Transverse colon (tissue), 4 donors: ENCODE measurements at regions of chr6 and their contacts with region 1.

Region 1: DNA sequence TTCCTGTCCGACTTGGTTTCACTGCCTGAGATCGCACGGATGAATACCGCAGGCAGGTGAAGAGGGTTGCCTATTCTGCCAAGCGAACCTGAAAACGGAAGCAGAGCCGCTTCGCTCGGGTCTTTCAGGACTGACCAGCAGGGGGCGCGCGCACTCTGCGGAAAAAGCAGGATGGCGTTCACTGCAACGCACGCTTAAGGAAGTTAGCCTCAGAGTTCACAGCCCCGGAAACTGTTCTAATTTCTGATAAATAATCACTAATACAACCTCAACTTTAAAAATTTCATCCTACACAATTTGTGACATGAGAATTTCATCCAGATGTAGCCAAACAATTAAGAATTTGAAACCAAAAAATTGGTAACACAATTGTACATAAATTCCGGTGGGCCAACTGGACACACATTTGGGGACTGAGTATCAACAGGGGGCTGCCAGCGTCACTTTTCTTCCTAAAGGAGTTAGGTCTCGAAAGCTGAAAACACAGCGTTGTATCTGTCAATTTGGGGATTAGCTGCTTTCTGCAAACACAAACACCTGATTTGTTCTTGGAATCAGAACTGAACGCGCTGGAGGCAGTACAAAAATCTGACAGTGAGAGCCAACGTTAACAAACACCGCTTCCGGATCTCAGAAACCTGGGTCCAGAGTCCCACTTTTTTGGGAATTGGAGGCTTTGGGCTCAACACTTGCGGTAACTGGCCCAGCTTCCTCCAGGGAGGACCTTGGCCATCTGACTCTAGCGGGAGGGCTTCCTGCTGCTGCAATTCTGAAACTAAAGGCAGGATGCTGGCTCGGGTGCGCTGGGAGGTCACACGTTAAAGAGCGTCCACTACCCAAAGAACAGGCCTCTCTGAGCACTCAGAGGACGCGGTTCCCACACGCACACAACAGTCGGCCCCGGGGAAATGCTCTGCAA is 8.8 kb downstream of the PXDC1 start:
- DNase-seq: peak; percentile 91
- H3K4me3 ChIP-seq: peak overlapping the region in 1 of 4 donors; percentile 20
- H3K27ac ChIP-seq: peak overlapping the region; percentile 62 to 84 (median 74)
- H3K4me1 ChIP-seq: peaks cover 16 to 49% (median 37%) of the 10 kb centered on the region in 4 donors
- H3K27me3 ChIP-seq: no peaks in the 10 kb centered on the region
- CTCF ChIP-seq: peak; percentile 94 to 96 (median 95)
- EP300 ChIP-seq: no peak
- POLR2A ChIP-seq: no peak

Region 2: DNA sequence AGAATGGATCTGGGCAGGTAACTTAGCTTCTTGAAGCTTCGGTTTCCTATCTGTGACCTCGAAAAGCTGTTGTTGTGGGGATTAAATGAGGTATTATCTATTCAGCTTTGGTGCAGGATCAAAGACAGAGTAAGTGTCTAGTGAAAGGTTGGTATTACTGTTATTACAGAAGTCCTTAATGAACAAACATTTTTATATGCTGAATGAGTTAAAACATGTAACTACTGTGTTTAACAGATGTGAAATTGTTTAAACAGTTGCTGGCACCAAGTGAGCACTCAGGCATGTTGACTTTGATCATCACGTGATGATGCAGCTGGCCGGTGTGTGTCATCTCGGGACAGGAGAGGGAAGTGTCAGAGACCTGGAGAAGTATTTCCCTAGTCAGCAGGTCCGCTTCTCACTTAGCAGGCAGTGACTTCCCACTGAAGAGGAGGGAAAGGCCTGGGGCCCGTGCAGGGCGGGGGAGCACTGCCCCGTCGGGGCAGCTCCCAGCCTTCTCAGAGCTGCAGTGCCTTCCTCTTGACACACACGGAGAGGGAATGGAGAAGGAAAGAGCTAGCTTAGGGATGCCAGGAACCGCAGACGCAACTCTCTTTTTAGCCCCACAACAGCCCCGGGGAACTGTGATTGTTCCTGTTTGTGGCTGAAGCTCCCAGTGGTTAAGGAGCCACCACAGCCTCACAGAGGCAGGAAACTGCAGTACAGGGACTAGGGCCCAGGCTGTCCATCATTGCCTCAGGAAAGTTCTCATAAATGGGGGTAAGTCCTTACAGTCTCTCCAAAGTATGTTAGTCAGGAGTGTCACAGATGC is 603.4 kb before region 1 on chr6:
- in situ Hi-C with region 1: loop called in 1 of 4 experiments (anchors 25 kb)
- intact Hi-C with region 1: no loop called
- DNase-seq: peak; percentile 79
- H3K4me3 ChIP-seq: no peak overlapping the region
- H3K27ac ChIP-seq: peak overlapping the region; percentile 50 to 62 (median 59)
- H3K4me1 ChIP-seq: peaks cover 4 to 26% (median 16%) of the 10 kb centered on the region in 4 donors
- H3K27me3 ChIP-seq: no peaks in the 10 kb centered on the region
- CTCF ChIP-seq: no peak
- EP300 ChIP-seq: no peak
- POLR2A ChIP-seq: no peak

Region 3: GRCh38 chr6:3929281-3929798 is 186.7 kb after region 1 on chr6:
- in situ Hi-C with region 1: loop called in 1 of 4 experiments (anchors 5 kb)
- intact Hi-C with region 1: loop called (anchors 2 kb)
- DNase-seq: no peak
- H3K4me3 ChIP-seq: no peak overlapping the region
- H3K27ac ChIP-seq: peak overlapping the region in 3 of 4 donors; percentile 46 to 48 (median 47)
- H3K4me1 ChIP-seq: no peaks in the 10 kb centered on the region
- H3K27me3 ChIP-seq: no peaks in the 10 kb centered on the region
- CTCF ChIP-seq: no peak
- EP300 ChIP-seq: no peak
- POLR2A ChIP-seq: no peak

Region 4: GRCh38 chr6:3943331-3943765 is 200.7 kb after region 1 on chr6:
- in situ Hi-C with region 1: no loop called
- intact Hi-C with region 1: no loop called
- DNase-seq: no peak
- H3K4me3 ChIP-seq: no peak overlapping the region
- H3K27ac ChIP-seq: no peak overlapping the region
- H3K4me1 ChIP-seq: peaks cover 0 to 5% (median 0%) of the 10 kb centered on the region in 4 donors
- H3K27me3 ChIP-seq: peaks cover 35% of the 10 kb centered on the region
- CTCF ChIP-seq: no peak
- EP300 ChIP-seq: no peak
- POLR2A ChIP-seq: no peak

Region 5: DNA sequence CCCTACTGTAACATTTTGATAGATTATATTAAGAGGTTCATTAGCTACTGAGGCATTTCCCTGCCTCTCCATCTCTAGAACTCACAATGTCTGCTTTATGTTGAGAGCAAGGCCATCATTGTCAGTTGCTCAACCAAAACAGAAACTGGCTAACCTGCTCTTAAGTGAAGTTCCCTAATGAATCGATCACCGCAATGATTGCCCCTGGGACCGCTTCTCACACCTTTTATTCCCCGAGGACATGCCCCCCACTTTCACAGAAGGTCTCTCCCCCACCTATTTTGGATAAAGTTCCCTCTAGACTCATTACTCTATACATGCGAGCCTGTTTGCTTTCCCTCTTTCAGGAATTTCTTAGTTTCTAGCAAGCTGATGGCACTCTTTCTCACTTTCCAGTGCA is 227.4 kb after region 1 on chr6:
- in situ Hi-C with region 1: no loop called
- intact Hi-C with region 1: no loop called
- DNase-seq: no peak
- H3K4me3 ChIP-seq: no peak overlapping the region
- H3K27ac ChIP-seq: no peak overlapping the region
- H3K4me1 ChIP-seq: no peaks in the 10 kb centered on the region
- H3K27me3 ChIP-seq: no peaks in the 10 kb centered on the region
- CTCF ChIP-seq: no peak
- EP300 ChIP-seq: no peak
- POLR2A ChIP-seq: no peak

Region 6: GRCh38 chr6:4135665-4136353 is 393.1 kb after region 1 on chr6:
- in situ Hi-C with region 1: loop called in 1 of 4 experiments (anchors 25 kb)
- intact Hi-C with region 1: no loop called
- DNase-seq: peak; percentile 98
- H3K4me3 ChIP-seq: peak overlapping the region; percentile 71 to 92 (median 78)
- H3K27ac ChIP-seq: peak overlapping the region; percentile 93 to 97 (median 96)
- H3K4me1 ChIP-seq: peaks cover 0 to 36% (median 20%) of the 10 kb centered on the region in 4 donors
- H3K27me3 ChIP-seq: no peaks in the 10 kb centered on the region
- CTCF ChIP-seq: no peak
- EP300 ChIP-seq: no peak
- POLR2A ChIP-seq: peak; percentile 55

Region 7: DNA sequence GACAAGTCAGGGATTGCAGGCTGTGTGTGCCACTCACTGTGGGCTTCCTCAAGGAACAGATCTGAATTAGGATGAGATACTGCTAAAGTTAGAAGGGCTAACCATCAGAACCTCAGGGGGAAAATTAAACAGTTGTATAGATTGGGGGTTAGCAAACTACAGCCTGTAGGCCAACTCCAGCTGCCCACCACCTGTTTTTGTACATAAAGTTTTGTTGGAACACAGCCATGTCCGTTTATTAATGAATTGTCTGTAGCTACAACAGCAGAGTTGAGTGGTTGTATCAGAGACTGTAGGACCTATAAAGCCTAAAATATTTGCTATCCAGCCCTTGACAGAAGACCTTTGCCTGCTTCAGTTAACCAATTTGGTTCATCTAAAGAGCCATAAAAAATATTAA is 519.8 kb after region 1 on chr6:
- in situ Hi-C with region 1: no loop called
- intact Hi-C with region 1: no loop called
- DNase-seq: no peak
- H3K4me3 ChIP-seq: no peak overlapping the region
- H3K27ac ChIP-seq: no peak overlapping the region
- H3K4me1 ChIP-seq: no peaks in the 10 kb centered on the region
- H3K27me3 ChIP-seq: no peaks in the 10 kb centered on the region
- CTCF ChIP-seq: no peak
- EP300 ChIP-seq: no peak
- POLR2A ChIP-seq: no peak